Posterior vena cava (tissue), 2 donors: ENCODE measurements at regions of chr3 and their contacts with region 1.

Region 1: GRCh38 chr3:166955540-166955939 is 424.6 kb downstream of the ZBBX start:
- DNase-seq: peak; percentile 14

Region 2: DNA sequence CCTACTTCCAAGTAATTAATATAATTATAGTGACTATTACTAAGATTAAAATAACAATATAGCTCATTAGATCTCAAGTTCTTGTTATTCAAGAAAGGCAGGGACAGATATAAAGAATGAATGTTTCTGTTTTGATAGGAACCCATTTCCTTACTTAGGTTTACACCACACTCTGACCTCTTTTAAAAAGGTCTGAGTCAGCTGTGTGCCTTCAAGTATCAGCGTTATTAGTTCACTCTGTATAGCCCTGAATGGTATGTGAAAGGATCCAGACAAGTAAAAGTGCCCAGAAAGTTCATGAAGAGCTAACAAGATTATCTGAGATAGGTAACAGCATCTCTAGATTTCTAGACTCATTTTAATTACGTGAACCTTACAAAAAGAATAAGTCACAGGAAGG is 750.3 kb after region 1 on chr3:
- intact Hi-C with region 1: loop called in 1 of 2 experiments (anchors 5 kb)
- DNase-seq: no peak